H1 (cell line): ENCODE measurements at regions of chr11 and their contacts with region 1.

Region 1: GRCh38 chr11:124551189-124551588 is 7.7 kb upstream of the OR8B12 start:
- DNase-seq: no peak
- H3K4me3 ChIP-seq: no peak overlapping the region
- H3K27ac ChIP-seq: no peak overlapping the region
- H3K4me1 ChIP-seq: no peaks in the 10 kb centered on the region
- H3K27me3 ChIP-seq: no peaks in the 10 kb centered on the region
- CTCF ChIP-seq: peak in 1 of 3 experiments; percentile 55; a peak in 1 of 4 replicates
- EP300 ChIP-seq: no peak
- POLR2A ChIP-seq: no peak
- RAD21 ChIP-seq: peak in 1 of 2 experiments; percentile 11; a peak in 1 of 4 replicates

Region 2: DNA sequence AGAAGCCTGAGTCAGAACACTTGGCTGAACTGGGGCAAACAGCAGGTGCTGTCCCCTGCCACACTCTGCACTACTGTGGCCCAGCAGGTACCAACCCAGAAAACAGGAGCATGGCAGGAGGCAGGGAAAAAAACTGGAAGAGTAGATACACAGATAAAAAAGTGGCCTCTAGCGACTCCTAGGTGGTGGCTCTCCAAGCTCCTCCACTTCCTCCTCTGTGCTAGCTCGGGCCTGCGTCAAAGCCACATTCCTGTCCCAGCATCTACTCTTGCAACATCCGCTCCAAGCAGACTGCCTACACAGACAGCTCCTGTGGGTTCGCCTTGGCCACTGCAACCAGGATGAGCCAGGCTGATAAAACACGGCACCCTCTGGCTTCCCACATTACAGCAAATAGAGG is 14.7 kb before region 1 on chr11:
- CTCF ChIA-PET with region 1: interaction called, 11 read pairs
- POLR2A ChIA-PET with region 1: no interaction called
- DNase-seq: peak; percentile 47 to 59
- H3K4me3 ChIP-seq: no peak overlapping the region
- H3K27ac ChIP-seq: no peak overlapping the region
- H3K4me1 ChIP-seq: peaks cover 0 to 5% (median under 1%) of the 10 kb centered on the region in 4 experiments; a peak in 4 of 7 replicates
- H3K27me3 ChIP-seq: no peaks in the 10 kb centered on the region
- CTCF ChIP-seq: peak in 2 of 3 experiments; percentile 24 to 49; a peak in 3 of 4 replicates
- EP300 ChIP-seq: no peak
- POLR2A ChIP-seq: no peak
- RAD21 ChIP-seq: peak; percentile 44 to 59

Region 3: GRCh38 chr11:124570160-124570559 is 19.0 kb after region 1 on chr11:
- CTCF ChIA-PET with region 1: interaction called, 11 read pairs
- POLR2A ChIA-PET with region 1: no interaction called
- DNase-seq: no peak
- H3K4me3 ChIP-seq: no peak overlapping the region
- H3K27ac ChIP-seq: no peak overlapping the region
- H3K4me1 ChIP-seq: peaks cover 0 to 3% (median 1%) of the 10 kb centered on the region in 4 experiments; a peak in 2 of 7 replicates
- H3K27me3 ChIP-seq: no peaks in the 10 kb centered on the region
- CTCF ChIP-seq: no peak
- EP300 ChIP-seq: no peak
- POLR2A ChIP-seq: no peak
- RAD21 ChIP-seq: no peak

Region 4: DNA sequence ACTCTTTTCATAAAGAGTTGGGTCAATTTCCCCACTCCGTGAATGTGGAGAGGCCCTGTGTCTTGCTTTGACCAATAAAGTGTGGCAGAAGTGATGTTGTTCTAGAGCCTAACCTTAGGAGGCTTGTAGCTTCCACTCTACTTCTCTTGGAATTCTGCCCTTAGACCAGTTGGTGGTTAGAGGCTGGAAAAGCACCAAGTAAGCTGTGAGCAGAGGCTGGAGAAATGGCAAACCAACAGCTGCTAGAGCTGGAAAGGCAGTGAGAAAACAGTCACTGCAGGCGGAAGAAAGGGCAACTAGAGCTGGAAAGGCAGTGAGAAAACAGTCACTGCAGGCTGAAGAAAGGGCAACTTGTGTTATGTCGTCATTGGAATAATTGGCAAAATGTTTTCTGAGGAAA is 278.8 kb after region 1 on chr11:
- CTCF ChIA-PET with region 1: no interaction called
- POLR2A ChIA-PET with region 1: no interaction called
- DNase-seq: no peak
- H3K4me3 ChIP-seq: no peak overlapping the region
- H3K27ac ChIP-seq: no peak overlapping the region
- H3K4me1 ChIP-seq: no peaks in the 10 kb centered on the region; a peak in 1 of 7 replicates
- H3K27me3 ChIP-seq: no peaks in the 10 kb centered on the region; a peak in 1 of 7 replicates
- CTCF ChIP-seq: no peak
- EP300 ChIP-seq: no peak
- POLR2A ChIP-seq: no peak
- RAD21 ChIP-seq: no peak